ENCODE measurements at regions of chr10 and their contacts with region 1.

Region 1: DNA sequence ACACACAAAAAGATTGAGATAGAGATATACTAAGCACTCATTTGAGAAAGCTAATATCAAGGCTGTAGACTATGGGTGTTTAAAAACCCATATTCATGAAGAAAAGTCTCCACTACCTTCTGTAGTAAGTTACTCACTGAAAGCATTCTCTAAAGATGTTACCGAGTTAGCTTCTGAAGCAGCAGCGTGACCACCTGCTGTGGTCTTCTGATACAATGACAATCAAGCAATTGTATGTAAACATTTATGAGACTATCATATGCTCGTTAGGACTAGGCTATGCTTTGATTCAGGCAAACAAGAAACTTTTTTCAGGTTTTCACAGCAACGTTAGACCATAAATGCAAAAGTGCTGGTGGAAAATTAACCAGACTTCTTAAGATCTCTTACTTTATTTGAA is 11.2 kb downstream of the RHOBTB1 start:
- DNase-seq: no peak
- H3K4me3 ChIP-seq: no peak overlapping the region
- H3K27ac ChIP-seq: no peak overlapping the region
- H3K4me1 ChIP-seq: no peaks in the 10 kb centered on the region
- H3K27me3 ChIP-seq: no peaks in the 10 kb centered on the region
- CTCF ChIP-seq: no peak
- EP300 ChIP-seq: no peak
- POLR2A ChIP-seq: no peak
- RAD21 ChIP-seq: no peak

Region 2: GRCh38 chr10:60863796-60864195 is 69.0 kb before region 1 on chr10:
- CTCF ChIA-PET with region 1: no interaction called
- POLR2A ChIA-PET with region 1: no interaction called
- DNase-seq: no peak
- H3K4me3 ChIP-seq: no peak overlapping the region
- H3K27ac ChIP-seq: no peak overlapping the region
- H3K4me1 ChIP-seq: no peaks in the 10 kb centered on the region
- H3K27me3 ChIP-seq: no peaks in the 10 kb centered on the region
- CTCF ChIP-seq: no peak
- EP300 ChIP-seq: no peak
- POLR2A ChIP-seq: no peak
- RAD21 ChIP-seq: no peak

Region 3: DNA sequence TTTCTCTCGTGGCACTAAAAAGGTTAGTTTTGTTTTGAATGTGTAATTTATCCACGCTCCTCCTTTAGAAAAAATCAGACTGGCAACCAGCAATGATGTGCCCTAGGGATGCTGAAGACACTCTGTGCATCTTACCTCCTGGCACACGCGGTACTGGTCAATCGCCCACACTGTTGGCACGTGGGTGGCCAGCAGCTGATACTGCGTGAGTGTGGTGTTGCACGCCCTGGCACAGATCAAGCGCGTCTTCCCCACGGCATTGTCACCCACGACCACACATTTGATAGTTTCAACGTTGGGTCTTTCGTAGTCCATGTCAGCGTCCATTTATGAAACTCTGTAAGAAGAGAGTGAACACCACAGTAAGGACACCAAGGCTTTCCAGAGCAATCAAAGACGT is 21.5 kb before region 1 on chr10:
- CTCF ChIA-PET with region 1: no interaction called
- POLR2A ChIA-PET with region 1: no interaction called
- DNase-seq: no peak
- H3K4me3 ChIP-seq: no peak overlapping the region
- H3K27ac ChIP-seq: no peak overlapping the region
- H3K4me1 ChIP-seq: no peaks in the 10 kb centered on the region
- H3K27me3 ChIP-seq: no peaks in the 10 kb centered on the region
- CTCF ChIP-seq: no peak
- EP300 ChIP-seq: no peak
- POLR2A ChIP-seq: no peak
- RAD21 ChIP-seq: no peak

Region 4: DNA sequence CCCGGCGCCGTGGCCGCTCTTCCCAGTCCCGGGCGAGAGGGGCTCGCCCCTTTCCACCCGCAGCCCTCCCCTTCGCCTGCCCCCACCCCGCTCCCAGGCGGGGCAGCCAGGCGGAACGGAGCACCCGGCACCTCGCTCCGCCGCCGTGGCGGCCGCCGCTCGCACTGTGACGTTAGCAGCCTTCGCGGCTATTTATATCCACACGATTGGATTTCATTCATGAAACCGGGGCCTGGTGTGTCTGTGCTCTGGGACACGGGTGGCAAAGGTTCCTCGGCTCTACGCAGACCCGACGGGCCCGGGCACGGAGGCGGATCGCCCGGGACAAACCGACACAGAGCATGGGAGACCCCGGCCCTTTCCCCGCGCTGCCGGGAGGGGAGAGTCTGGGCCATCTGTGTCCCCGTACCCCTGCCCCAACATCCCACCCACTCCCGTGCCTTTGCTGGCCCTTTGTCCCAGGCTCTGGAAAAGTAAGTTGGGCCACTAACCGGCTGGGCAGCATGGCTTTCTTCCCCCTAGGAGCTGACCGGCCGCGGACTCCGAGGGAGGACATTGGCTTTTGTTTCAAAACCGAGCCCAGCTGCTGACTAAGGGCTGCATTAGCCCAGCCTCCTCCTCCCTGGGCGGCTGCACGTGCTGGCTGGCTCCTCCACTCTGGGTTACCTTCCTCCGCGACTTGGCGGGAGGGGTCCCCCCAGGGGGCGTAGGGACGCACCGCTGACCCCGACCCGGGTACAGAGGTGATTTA is 11.6 kb after region 1 on chr10 and contains the start of gene RHOBTB1:
- CTCF ChIA-PET with region 1: interaction called, 3 read pairs
- POLR2A ChIA-PET with region 1: interaction called, 12 read pairs
- DNase-seq: peak in 1 of 2 experiments; percentile 77
- H3K4me3 ChIP-seq: peak within 1 kb of the TSS; percentile 69 to 72 (median 71)
- H3K27ac ChIP-seq: peak within 1 kb of the TSS; percentile 71
- H3K4me1 ChIP-seq: peaks cover 3 to 9% (median 5%) of the 10 kb centered on the region in 4 experiments; a peak in 6 of 7 replicates
- H3K27me3 ChIP-seq: peaks cover 0 to 13% (median 9%) of the 10 kb centered on the region in 4 experiments; a peak in 5 of 7 replicates
- CTCF ChIP-seq: no peak
- EP300 ChIP-seq: no peak
- POLR2A ChIP-seq: peak; percentile 47 to 62; a peak in 2 of 3 replicates
- RAD21 ChIP-seq: no peak
- total RNA-seq, gene RHOBTB1: 7.4 and 9.3 TPM in 2 replicates

Measured in H1 (cell line).